Right lobe of liver (tissue), 6 donors: ENCODE measurements at regions of chr7 and their contacts with region 1.

Region 1: DNA sequence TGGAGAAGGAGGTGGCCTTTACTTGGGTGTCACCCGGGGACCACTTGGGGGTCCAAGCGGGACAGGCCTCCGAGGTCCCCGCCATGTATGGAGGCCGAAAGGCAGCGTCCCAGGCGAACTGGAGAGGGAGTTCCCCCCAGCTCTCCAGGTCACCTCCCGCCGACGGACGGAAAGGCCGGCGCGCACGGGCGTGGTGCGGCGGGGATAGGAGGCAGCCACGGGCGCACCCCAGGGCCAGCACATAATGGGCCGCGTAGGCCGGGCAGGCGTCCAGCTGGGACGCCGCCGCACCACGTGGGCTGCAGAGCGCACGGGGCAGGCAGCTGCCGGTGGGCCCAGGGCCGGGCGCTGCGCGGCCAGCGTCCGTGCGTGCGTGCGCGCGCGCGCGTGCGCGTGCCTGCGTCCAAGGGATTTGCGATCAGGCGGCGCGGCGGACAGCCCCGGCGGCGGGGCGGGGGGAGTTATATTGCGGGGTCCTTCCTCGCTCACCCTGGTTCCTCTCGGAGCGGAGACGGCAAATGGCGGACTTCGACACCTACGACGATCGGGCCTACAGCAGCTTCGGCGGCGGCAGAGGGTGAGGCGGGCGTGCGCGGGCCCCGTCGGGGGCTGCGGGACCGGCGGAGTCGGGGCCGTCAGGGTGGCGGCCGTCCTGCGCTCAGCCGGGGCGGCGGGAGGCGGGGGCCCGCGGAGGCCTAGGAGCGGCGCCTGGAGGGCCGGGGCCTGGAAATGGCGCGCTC is at the start of gene EIF4H:
- DNase-seq: peak; percentile 97 to 98 (median 97)
- ATAC-seq: peak; percentile 88 to 94 (median 91)
- H3K4me3 ChIP-seq: peak within 1 kb of the TSS; percentile 83 to 98 (median 93)
- H3K27ac ChIP-seq: peak within 1 kb of the TSS; percentile 91 to 94 (median 91)
- H3K4me1 ChIP-seq: peaks cover 0 to 50% (median 8%) of the 10 kb centered on the region in 4 donors
- H3K27me3 ChIP-seq: no peaks in the 10 kb centered on the region
- CTCF ChIP-seq: no peak
- POLR2A ChIP-seq: peak; percentile 95
- total RNA-seq, gene EIF4H: 117 to 128 (median 118) TPM

Region 2: DNA sequence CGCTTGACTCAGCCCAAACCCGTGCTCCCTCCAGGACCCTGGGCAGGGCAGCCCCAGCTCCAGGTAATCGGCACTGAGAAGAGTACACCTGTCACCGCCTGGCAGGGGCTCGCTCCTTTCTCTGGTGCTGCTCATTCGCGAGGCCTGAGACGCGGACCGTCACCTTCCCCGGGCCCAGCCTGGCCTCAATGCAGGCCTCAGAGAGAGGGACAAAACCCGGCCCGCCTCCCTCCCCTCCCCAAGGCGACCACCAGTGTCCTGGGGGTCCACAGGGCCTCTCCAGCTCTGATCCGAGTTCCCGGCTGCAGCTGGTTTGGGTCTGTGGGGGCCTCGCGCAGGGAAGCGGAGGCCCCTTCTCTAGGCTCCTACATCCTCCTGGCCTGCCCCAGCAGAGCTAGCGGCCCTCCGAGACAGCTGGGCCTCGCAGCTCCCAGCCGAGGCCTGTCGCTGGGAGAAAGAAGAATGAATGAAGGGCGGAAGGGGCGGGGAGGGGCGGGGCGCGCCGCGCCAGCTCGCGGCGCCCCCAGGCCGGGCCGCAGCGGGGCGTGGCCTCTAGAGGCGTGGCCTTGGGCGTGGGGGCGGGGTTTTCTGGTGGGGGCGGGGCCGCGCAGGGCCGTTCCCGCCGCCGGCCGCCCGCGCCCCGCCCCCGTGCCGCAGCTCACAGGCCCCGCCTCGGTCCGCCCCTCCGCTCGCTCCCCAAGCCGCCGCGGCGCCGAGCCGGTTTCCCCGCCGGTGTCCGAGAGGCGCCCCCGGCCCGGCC is 90.7 kb before region 1 on chr7 and contains the start of gene LIMK1:
- intact Hi-C with region 1: loop called in 1 of 2 experiments (anchors 10 kb)
- DNase-seq: peak; percentile 82 to 85 (median 84)
- ATAC-seq: peak; percentile 93 to 99 (median 96)
- H3K4me3 ChIP-seq: peak within 1 kb of the TSS; percentile 56 to 69 (median 65)
- H3K27ac ChIP-seq: no peak within 1 kb of the TSS
- H3K4me1 ChIP-seq: peaks cover 0 to 12% (median 0%) of the 10 kb centered on the region in 4 donors
- H3K27me3 ChIP-seq: no peaks in the 10 kb centered on the region
- CTCF ChIP-seq: no peak
- POLR2A ChIP-seq: no peak
- total RNA-seq, gene LIMK1: 3.1 to 9.9 (median 5.8) TPM